Naive thymus-derived CD4-positive, alpha-beta T cell (primary cell): ENCODE measurements at regions of chr5 and their contacts with region 1.

Region 1: GRCh38 chr5:53069626-53070025 is 39.9 kb downstream of the MOCS2 start:
- DNase-seq: peak in 1 of 9 donors; percentile 65
- ATAC-seq: no peak
- H3K4me3 ChIP-seq: no peak overlapping the region
- H3K4me3 Mint-ChIP-seq: peak overlapping the region in 1 of 10 donors; percentile 80
- H3K27ac ChIP-seq: no peak overlapping the region
- H3K27ac Mint-ChIP-seq: peak overlapping the region in 1 of 9 donors; percentile 75
- H3K4me1 ChIP-seq: no peaks in the 10 kb centered on the region
- H3K4me1 Mint-ChIP-seq: peaks cover 0 to 42% (median 0%) of the 10 kb centered on the region in 7 donors
- H3K27me3 ChIP-seq: no peaks in the 10 kb centered on the region
- H3K27me3 Mint-ChIP-seq: peaks cover 0 to 7% (median 0%) of the 10 kb centered on the region in 5 donors

Region 2: GRCh38 chr5:52725065-52725746 is 344.4 kb before region 1 on chr5:
- CTCF ChIA-PET with region 1: no interaction called
- POLR2A ChIA-PET with region 1: no interaction called
- intact Hi-C with region 1: no loop called
- DNase-seq: peak in 8 of 9 donors; percentile 44 to 94 (median 90)
- ATAC-seq: peak; percentile 98
- H3K4me3 ChIP-seq: no peak overlapping the region
- H3K4me3 Mint-ChIP-seq: peak overlapping the region; percentile 63 to 92 (median 81)
- H3K27ac ChIP-seq: peak overlapping the region; percentile 61
- H3K27ac Mint-ChIP-seq: peak overlapping the region; percentile 89 to 98 (median 95)
- H3K4me1 ChIP-seq: peaks cover 33 to 37% of the 10 kb centered on the region in 2 donors
- H3K4me1 Mint-ChIP-seq: peaks cover 28 to 81% (median 69%) of the 10 kb centered on the region in 7 donors
- H3K27me3 ChIP-seq: no peaks in the 10 kb centered on the region
- H3K27me3 Mint-ChIP-seq: no peaks in the 10 kb centered on the region

Region 3: GRCh38 chr5:53008751-53009150 is 60.9 kb before region 1 on chr5:
- CTCF ChIA-PET with region 1: no interaction called
- POLR2A ChIA-PET with region 1: no interaction called
- intact Hi-C with region 1: loop called in 1 of 2 experiments (anchors 1 kb)
- DNase-seq: peak in 1 of 9 donors; percentile 45
- ATAC-seq: peak; percentile 59
- H3K4me3 ChIP-seq: no peak overlapping the region
- H3K4me3 Mint-ChIP-seq: peak overlapping the region in 1 of 10 donors; percentile 21
- H3K27ac ChIP-seq: no peak overlapping the region
- H3K27ac Mint-ChIP-seq: peak overlapping the region in 2 of 9 donors; percentile 23 to 76
- H3K4me1 ChIP-seq: peaks cover 0 to 9% of the 10 kb centered on the region in 2 donors
- H3K4me1 Mint-ChIP-seq: peaks cover 0 to 78% (median 23%) of the 10 kb centered on the region in 7 donors
- H3K27me3 ChIP-seq: no peaks in the 10 kb centered on the region
- H3K27me3 Mint-ChIP-seq: peaks cover 0 to 3% (median 0%) of the 10 kb centered on the region in 5 donors

Region 4: GRCh38 chr5:53031695-53032096 is 37.9 kb before region 1 on chr5:
- CTCF ChIA-PET with region 1: interaction called, 4 read pairs
- POLR2A ChIA-PET with region 1: no interaction called
- intact Hi-C with region 1: loop called in 1 of 2 experiments (anchors 1 kb)
- DNase-seq: peak in 8 of 9 donors; percentile 25 to 68 (median 60)
- ATAC-seq: peak; percentile 89
- H3K4me3 ChIP-seq: no peak overlapping the region
- H3K4me3 Mint-ChIP-seq: peak overlapping the region in 8 of 10 donors; percentile 0 to 79 (median 60)
- H3K27ac ChIP-seq: peak overlapping the region; percentile 44
- H3K27ac Mint-ChIP-seq: peak overlapping the region; percentile 53 to 89 (median 81)
- H3K4me1 ChIP-seq: peaks cover 0 to 18% of the 10 kb centered on the region in 2 donors
- H3K4me1 Mint-ChIP-seq: peaks cover 12 to 55% (median 29%) of the 10 kb centered on the region in 7 donors
- H3K27me3 ChIP-seq: no peaks in the 10 kb centered on the region
- H3K27me3 Mint-ChIP-seq: no peaks in the 10 kb centered on the region

Region 5: GRCh38 chr5:53041071-53041692 is 28.4 kb before region 1 on chr5:
- CTCF ChIA-PET with region 1: no interaction called
- POLR2A ChIA-PET with region 1: no interaction called
- intact Hi-C with region 1: loop called in 1 of 2 experiments (anchors 1 kb)
- DNase-seq: peak in 5 of 9 donors; percentile 6 to 49 (median 27)
- ATAC-seq: peak; percentile 81
- H3K4me3 ChIP-seq: peak overlapping the region; percentile 24
- H3K4me3 Mint-ChIP-seq: peak overlapping the region; percentile 16 to 88 (median 74)
- H3K27ac ChIP-seq: no peak overlapping the region
- H3K27ac Mint-ChIP-seq: peak overlapping the region; percentile 12 to 92 (median 66)
- H3K4me1 ChIP-seq: peaks cover 7 to 12% of the 10 kb centered on the region in 2 donors
- H3K4me1 Mint-ChIP-seq: peaks cover 11 to 77% (median 24%) of the 10 kb centered on the region in 7 donors
- H3K27me3 ChIP-seq: no peaks in the 10 kb centered on the region
- H3K27me3 Mint-ChIP-seq: peaks cover 0 to 4% (median 0%) of the 10 kb centered on the region in 5 donors

Region 6: DNA sequence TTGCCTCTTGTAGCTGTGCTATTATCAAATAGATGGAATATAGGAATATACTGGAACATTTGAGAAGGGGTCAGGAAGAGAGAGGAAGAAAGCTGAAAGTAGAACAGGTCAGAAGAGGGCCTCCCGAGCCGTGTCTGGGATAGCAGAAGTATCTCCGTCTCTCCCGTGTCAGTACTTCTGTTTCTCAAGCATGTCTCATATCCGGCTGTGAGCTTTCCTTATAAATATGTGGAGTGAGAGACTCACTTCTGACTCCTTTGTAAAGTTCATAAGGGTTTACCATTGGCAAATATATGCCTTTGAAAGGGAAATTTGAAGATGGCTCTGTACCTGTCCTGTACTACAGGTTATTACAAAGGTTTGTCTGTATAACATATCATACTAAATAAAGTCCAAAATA is 10.3 kb before region 1 on chr5:
- CTCF ChIA-PET with region 1: no interaction called
- POLR2A ChIA-PET with region 1: no interaction called
- intact Hi-C with region 1: no loop called
- DNase-seq: no peak
- ATAC-seq: no peak
- H3K4me3 ChIP-seq: no peak overlapping the region
- H3K4me3 Mint-ChIP-seq: no peak overlapping the region
- H3K27ac ChIP-seq: no peak overlapping the region
- H3K27ac Mint-ChIP-seq: no peak overlapping the region
- H3K4me1 ChIP-seq: no peaks in the 10 kb centered on the region
- H3K4me1 Mint-ChIP-seq: peaks cover 0 to 4% (median 0%) of the 10 kb centered on the region in 7 donors
- H3K27me3 ChIP-seq: no peaks in the 10 kb centered on the region
- H3K27me3 Mint-ChIP-seq: peaks cover 0 to 11% (median 2%) of the 10 kb centered on the region in 5 donors

Region 7: DNA sequence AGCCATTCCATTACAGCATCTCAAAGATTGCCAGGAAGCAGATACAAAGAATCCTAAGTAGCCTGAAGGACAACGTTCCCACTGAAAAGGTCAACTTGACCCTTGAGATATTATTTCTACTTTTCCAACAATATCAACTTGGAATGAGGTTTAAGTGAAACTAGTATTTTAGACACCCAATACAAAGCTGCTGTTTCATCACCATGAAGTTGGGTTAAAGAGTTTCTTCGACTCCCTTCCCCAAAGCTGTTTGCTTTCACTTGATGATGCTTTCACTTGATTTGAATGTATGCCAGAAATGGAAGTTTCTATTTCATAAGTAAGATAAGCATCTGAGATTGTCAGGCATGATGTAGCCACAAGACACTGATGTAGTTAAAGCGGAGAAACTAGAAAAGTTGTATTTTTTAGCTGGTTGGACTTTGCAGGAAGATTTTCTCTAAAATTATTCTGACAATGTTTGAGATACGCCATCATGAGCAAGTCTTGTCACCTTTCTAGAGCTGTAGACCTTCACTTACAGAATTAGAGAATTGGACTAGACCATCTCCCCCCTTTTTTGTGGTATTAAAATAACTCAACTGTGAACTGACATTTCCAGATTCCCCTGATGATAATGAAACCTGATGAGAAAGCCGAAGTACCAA is 19.8 kb after region 1 on chr5:
- CTCF ChIA-PET with region 1: interaction called, 3 read pairs
- POLR2A ChIA-PET with region 1: no interaction called
- intact Hi-C with region 1: loop called in 1 of 2 experiments (anchors 1 kb)
- DNase-seq: peak in 6 of 9 donors; percentile 29 to 60 (median 40)
- ATAC-seq: peak; percentile 65
- H3K4me3 ChIP-seq: no peak overlapping the region
- H3K4me3 Mint-ChIP-seq: peak overlapping the region in 7 of 10 donors; percentile 32 to 71 (median 47)
- H3K27ac ChIP-seq: no peak overlapping the region
- H3K27ac Mint-ChIP-seq: peak overlapping the region in 5 of 9 donors; percentile 25 to 76 (median 40)
- H3K4me1 ChIP-seq: peaks cover 0 to 16% of the 10 kb centered on the region in 2 donors
- H3K4me1 Mint-ChIP-seq: peaks cover 11 to 61% (median 19%) of the 10 kb centered on the region in 7 donors
- H3K27me3 ChIP-seq: no peaks in the 10 kb centered on the region
- H3K27me3 Mint-ChIP-seq: peaks cover 0 to 2% (median 0%) of the 10 kb centered on the region in 5 donors

Region 8: GRCh38 chr5:53095931-53096525 is 26.4 kb after region 1 on chr5:
- CTCF ChIA-PET with region 1: interaction called, 3 read pairs
- POLR2A ChIA-PET with region 1: no interaction called
- intact Hi-C with region 1: loop called in 1 of 2 experiments (anchors 2 kb)
- DNase-seq: peak; percentile 17 to 69 (median 59)
- ATAC-seq: peak; percentile 96
- H3K4me3 ChIP-seq: no peak overlapping the region
- H3K4me3 Mint-ChIP-seq: no peak overlapping the region
- H3K27ac ChIP-seq: no peak overlapping the region
- H3K27ac Mint-ChIP-seq: peak overlapping the region in 3 of 9 donors; percentile 41 to 64 (median 53)
- H3K4me1 ChIP-seq: no peaks in the 10 kb centered on the region
- H3K4me1 Mint-ChIP-seq: peaks cover 0 to 28% (median 3%) of the 10 kb centered on the region in 7 donors
- H3K27me3 ChIP-seq: no peaks in the 10 kb centered on the region
- H3K27me3 Mint-ChIP-seq: no peaks in the 10 kb centered on the region

Region 9: GRCh38 chr5:54492178-54492577 is 1422.6 kb after region 1 on chr5:
- CTCF ChIA-PET with region 1: no interaction called
- POLR2A ChIA-PET with region 1: no interaction called
- intact Hi-C with region 1: no loop called
- DNase-seq: no peak
- ATAC-seq: no peak
- H3K4me3 ChIP-seq: no peak overlapping the region
- H3K4me3 Mint-ChIP-seq: no peak overlapping the region
- H3K27ac ChIP-seq: no peak overlapping the region
- H3K27ac Mint-ChIP-seq: no peak overlapping the region
- H3K4me1 ChIP-seq: no peaks in the 10 kb centered on the region
- H3K4me1 Mint-ChIP-seq: no peaks in the 10 kb centered on the region
- H3K27me3 ChIP-seq: no peaks in the 10 kb centered on the region
- H3K27me3 Mint-ChIP-seq: peaks cover 0 to 19% (median 4%) of the 10 kb centered on the region in 5 donors